ENCODE measurements at regions of chr7 and their contacts with region 1.

Region 1: GRCh38 chr7:139936760-139937310 is 107.8 kb downstream of the TBXAS1 start:
- DNase-seq: no peak
- H3K4me3 ChIP-seq: no peak overlapping the region
- H3K27ac ChIP-seq: no peak overlapping the region
- H3K4me1 ChIP-seq: no peaks in the 10 kb centered on the region
- H3K27me3 ChIP-seq: no peaks in the 10 kb centered on the region
- CTCF ChIP-seq: no peak

Region 2: GRCh38 chr7:139452958-139453672 is 483.7 kb before region 1 on chr7:
- intact Hi-C with region 1: no loop called
- DNase-seq: no peak
- H3K4me3 ChIP-seq: no peak overlapping the region
- H3K27ac ChIP-seq: no peak overlapping the region
- H3K4me1 ChIP-seq: no peaks in the 10 kb centered on the region
- H3K27me3 ChIP-seq: no peaks in the 10 kb centered on the region
- CTCF ChIP-seq: no peak

Region 3: GRCh38 chr7:139995017-139995931 is 58.4 kb after region 1 on chr7:
- intact Hi-C with region 1: loop called (anchors 10 kb)
- DNase-seq: no peak
- H3K4me3 ChIP-seq: no peak overlapping the region
- H3K27ac ChIP-seq: no peak overlapping the region
- H3K4me1 ChIP-seq: no peaks in the 10 kb centered on the region
- H3K27me3 ChIP-seq: no peaks in the 10 kb centered on the region
- CTCF ChIP-seq: no peak

Region 4: DNA sequence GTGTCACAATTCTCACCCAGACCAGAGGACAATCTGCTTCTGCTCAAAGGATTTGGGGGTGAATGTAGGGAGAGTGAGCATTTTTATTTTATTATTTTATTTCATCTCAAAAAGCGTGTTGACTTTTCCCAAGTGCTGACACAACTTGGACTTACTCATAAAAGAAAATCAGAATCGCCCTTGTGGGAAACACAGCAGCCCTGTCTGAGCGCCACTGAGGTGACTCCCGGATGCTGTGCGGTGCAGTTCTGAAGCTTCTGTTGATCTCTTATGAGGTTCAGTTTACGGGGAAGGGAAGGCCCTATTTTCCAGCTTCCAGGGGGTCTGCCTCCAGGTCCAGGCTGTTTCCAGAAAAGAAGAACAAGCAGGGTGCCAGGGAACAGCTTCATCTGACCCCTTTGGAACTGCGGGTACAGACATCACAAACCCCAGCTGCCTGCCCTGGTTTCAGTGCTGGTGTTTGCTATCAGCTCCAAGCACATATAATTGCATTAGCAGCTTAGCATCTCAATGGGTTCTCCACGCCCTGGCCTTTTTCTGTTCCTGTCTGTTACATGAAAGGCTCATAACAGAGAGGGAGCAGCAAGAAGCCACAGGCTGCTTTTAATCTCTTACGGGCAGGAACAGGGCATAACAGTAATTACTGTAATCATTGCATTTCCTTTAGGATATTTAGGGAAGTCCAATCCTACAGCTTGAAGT is 73.5 kb after region 1 on chr7:
- intact Hi-C with region 1: no loop called
- DNase-seq: no peak
- H3K4me3 ChIP-seq: no peak overlapping the region
- H3K27ac ChIP-seq: no peak overlapping the region
- H3K4me1 ChIP-seq: no peaks in the 10 kb centered on the region
- H3K27me3 ChIP-seq: no peaks in the 10 kb centered on the region
- CTCF ChIP-seq: no peak

Measured in colonic mucosa (tissue), 4 donors.